ENCODE measurements at regions of chr1 and their contacts with region 1.

Region 1: GRCh38 chr1:195218428-195219212 is 1389.6 kb downstream of the KCNT2 start:
- DNase-seq: no peak
- ATAC-seq: no peak
- H3K4me3 Mint-ChIP-seq: no peak overlapping the region
- H3K27ac Mint-ChIP-seq: no peak overlapping the region
- H3K4me1 Mint-ChIP-seq: no peaks in the 10 kb centered on the region
- H3K27me3 Mint-ChIP-seq: no peaks in the 10 kb centered on the region
- CTCF ChIP-seq: no peak

Region 2: GRCh38 chr1:196449459-196449858 is 1230.8 kb after region 1 on chr1:
- CTCF ChIA-PET with region 1: no interaction called
- POLR2A ChIA-PET with region 1: no interaction called
- intact Hi-C with region 1: loop called (anchors 5 kb)
- DNase-seq: no peak
- ATAC-seq: no peak
- H3K4me3 Mint-ChIP-seq: no peak overlapping the region
- H3K27ac Mint-ChIP-seq: no peak overlapping the region
- H3K4me1 Mint-ChIP-seq: no peaks in the 10 kb centered on the region
- H3K27me3 Mint-ChIP-seq: no peaks in the 10 kb centered on the region
- CTCF ChIP-seq: no peak

Measured in activated B cell treated with CpG ODN at 0.5 μM for 24 hours (primary cell).